ENCODE measurements at regions of chr9 and their contacts with region 1.

Region 1: GRCh38 chr9:132973713-132974112 is 4.8 kb upstream of the GFI1B start:
- DNase-seq: no peak
- ATAC-seq: no peak
- H3K4me3 ChIP-seq: no peak overlapping the region
- H3K27ac ChIP-seq: no peak overlapping the region
- H3K4me1 ChIP-seq: peaks cover 24% of the 10 kb centered on the region
- H3K27me3 ChIP-seq: peaks cover 0 to 30% of the 10 kb centered on the region in 2 experiments; a peak in 3 of 5 replicates
- CTCF ChIP-seq: no peak
- EP300 ChIP-seq: no peak
- POLR2A ChIP-seq: no peak
- RAD21 ChIP-seq: no peak

Region 2: GRCh38 chr9:132809677-132810271 is 163.9 kb before region 1 on chr9:
- CTCF ChIA-PET with region 1: interaction called, 9 read pairs
- POLR2A ChIA-PET with region 1: no interaction called
- in situ Hi-C with region 1: no loop called
- intact Hi-C with region 1: loop called (anchors 10 kb)
- DNase-seq: no peak
- ATAC-seq: no peak
- H3K4me3 ChIP-seq: no peak overlapping the region
- H3K27ac ChIP-seq: no peak overlapping the region
- H3K4me1 ChIP-seq: no peaks in the 10 kb centered on the region
- H3K27me3 ChIP-seq: peaks cover 7 to 53% of the 10 kb centered on the region in 2 experiments; a peak in 4 of 5 replicates
- CTCF ChIP-seq: no peak
- EP300 ChIP-seq: no peak
- POLR2A ChIP-seq: no peak
- RAD21 ChIP-seq: no peak

Region 3: DNA sequence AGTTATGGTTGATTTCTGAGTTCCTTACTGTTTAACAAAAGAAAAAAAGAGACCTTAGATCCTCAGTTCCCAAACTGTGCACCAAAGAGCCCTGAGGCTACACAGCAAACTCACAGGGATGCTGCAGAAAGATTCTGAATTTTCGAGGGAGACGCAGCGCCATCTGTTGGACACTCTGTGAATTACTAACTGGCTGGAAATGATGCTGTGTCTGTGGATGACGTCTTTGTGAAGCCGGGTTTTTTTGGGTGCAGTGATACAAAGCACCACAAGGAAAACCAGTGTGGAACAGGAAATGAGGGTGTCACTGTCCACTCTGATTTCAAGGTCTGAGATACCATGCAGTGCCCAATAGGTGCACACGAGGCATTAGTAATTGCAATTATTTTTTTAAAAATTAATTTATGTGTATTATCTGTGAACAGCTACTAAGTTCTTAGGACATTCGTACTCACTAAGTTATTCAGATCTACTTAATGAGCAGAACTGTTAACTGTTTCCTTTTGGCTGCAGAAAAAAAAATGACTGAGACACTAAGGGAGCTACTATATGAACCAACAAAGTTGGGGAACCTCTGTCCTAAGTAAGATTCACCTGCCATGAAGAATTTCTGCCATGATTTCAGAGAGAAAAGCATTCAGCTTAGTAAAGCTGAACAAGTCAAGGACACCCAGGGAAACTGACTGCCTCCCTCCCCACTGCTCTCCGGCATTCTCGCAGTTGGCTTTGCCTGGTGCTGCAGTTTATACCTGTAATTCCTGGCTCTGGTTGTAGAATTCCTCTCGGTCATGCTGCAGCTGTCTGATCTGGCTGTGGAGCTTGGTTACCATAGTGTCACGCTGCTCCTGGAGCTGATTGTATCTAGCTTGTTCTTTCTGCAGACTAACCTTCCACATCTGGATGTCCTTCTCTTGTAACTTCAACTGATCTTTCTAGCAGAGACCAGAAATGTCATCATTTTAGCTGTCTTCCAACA is 71.6 kb before region 1 on chr9:
- CTCF ChIA-PET with region 1: interaction called, 3 read pairs
- POLR2A ChIA-PET with region 1: no interaction called
- in situ Hi-C with region 1: no loop called
- intact Hi-C with region 1: loop called (anchors 2 kb)
- DNase-seq: peak; percentile 75
- ATAC-seq: peak; percentile 95
- H3K4me3 ChIP-seq: no peak overlapping the region
- H3K27ac ChIP-seq: no peak overlapping the region
- H3K4me1 ChIP-seq: no peaks in the 10 kb centered on the region
- H3K27me3 ChIP-seq: no peaks in the 10 kb centered on the region
- CTCF ChIP-seq: peak; percentile 85
- EP300 ChIP-seq: no peak
- POLR2A ChIP-seq: no peak
- RAD21 ChIP-seq: 0 out of 2 replicates have a peak, but pooled peaks have one; percentile 40

Region 4: GRCh38 chr9:132939169-132939568 is 34.5 kb before region 1 on chr9:
- CTCF ChIA-PET with region 1: no interaction called
- POLR2A ChIA-PET with region 1: no interaction called
- in situ Hi-C with region 1: no loop called
- intact Hi-C with region 1: no loop called
- DNase-seq: no peak
- ATAC-seq: no peak
- H3K4me3 ChIP-seq: no peak overlapping the region
- H3K27ac ChIP-seq: no peak overlapping the region
- H3K4me1 ChIP-seq: peaks cover 38% of the 10 kb centered on the region
- H3K27me3 ChIP-seq: no peaks in the 10 kb centered on the region; a peak in 2 of 5 replicates
- CTCF ChIP-seq: no peak
- EP300 ChIP-seq: no peak
- POLR2A ChIP-seq: no peak
- RAD21 ChIP-seq: no peak

Region 5: DNA sequence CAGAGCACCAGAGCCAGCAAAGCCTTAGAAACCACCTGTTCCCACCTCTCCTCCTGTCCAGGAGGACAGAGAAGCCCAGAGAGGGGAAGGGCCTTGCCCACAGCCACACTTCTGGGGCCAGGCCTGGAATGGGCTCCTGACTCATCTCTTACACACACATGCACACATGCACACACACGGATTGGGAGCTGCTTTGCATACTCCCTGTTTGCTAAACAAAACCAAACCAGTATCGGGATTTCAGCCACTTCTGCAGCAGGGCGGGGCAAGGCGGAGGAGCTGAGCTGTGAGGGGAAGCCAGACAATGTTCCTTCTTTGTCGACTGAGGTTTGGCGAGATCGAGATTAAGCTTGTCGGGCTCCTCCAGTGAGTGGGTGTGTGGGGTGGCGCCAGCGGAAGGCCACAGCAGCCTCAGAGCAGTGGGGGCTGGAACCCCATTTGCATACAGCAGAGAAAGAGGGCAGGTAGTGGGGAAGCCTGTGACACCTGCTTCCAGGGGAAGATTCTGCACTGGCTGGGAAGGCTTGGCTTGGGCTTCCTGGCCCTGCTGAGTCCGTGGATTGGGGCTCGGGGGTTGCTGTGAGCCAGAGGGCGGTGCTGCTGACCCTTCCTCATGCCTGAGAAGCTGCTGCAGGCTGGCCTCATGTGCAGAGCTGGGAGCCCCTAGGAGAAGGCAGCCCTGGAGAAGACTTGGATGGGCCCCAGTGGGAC is 20.9 kb after region 1 on chr9:
- CTCF ChIA-PET with region 1: no interaction called
- POLR2A ChIA-PET with region 1: interaction called, 6 read pairs
- in situ Hi-C with region 1: no loop called
- intact Hi-C with region 1: loop called (anchors 1 kb)
- DNase-seq: no peak
- ATAC-seq: peak; percentile 46
- H3K4me3 ChIP-seq: peak overlapping the region in 2 of 3 experiments; percentile 43 to 51; a peak in 2 of 6 replicates
- H3K27ac ChIP-seq: no peak overlapping the region
- H3K4me1 ChIP-seq: peaks cover 78% of the 10 kb centered on the region
- H3K27me3 ChIP-seq: peaks cover 5 to 35% of the 10 kb centered on the region in 2 experiments
- CTCF ChIP-seq: no peak
- EP300 ChIP-seq: no peak
- POLR2A ChIP-seq: no peak
- RAD21 ChIP-seq: no peak

Region 6: GRCh38 chr9:133023117-133023890 is 49.6 kb after region 1 on chr9:
- CTCF ChIA-PET with region 1: interaction called, 50 read pairs
- POLR2A ChIA-PET with region 1: no interaction called
- in situ Hi-C with region 1: no loop called
- intact Hi-C with region 1: loop called (anchors 1 kb)
- DNase-seq: no peak
- ATAC-seq: peak; percentile 22; the same call in 2 of the 3 replicates
- H3K4me3 ChIP-seq: peak overlapping the region in 1 of 3 experiments; percentile 23; a peak in 1 of 6 replicates
- H3K27ac ChIP-seq: no peak overlapping the region
- H3K4me1 ChIP-seq: peaks cover 29% of the 10 kb centered on the region
- H3K27me3 ChIP-seq: 0 out of 5 replicates have a peak, but pooled peaks cover 0 to 6% of the 10 kb centered on the region in 2 experiments
- CTCF ChIP-seq: no peak
- EP300 ChIP-seq: no peak
- POLR2A ChIP-seq: no peak
- RAD21 ChIP-seq: no peak

Measured in HepG2 (cell line).